HCT116 (cell line): ENCODE measurements at regions of chr3 and their contacts with region 1.

Region 1: GRCh38 chr3:141561426-141562034 is 74.7 kb downstream of the RASA2 start:
- DNase-seq: peak; percentile 58
- ATAC-seq: no peak
- H3K4me3 ChIP-seq: no peak overlapping the region
- H3K27ac ChIP-seq: no peak overlapping the region
- H3K4me1 ChIP-seq: no peaks in the 10 kb centered on the region
- H3K27me3 ChIP-seq: no peaks in the 10 kb centered on the region
- CTCF ChIP-seq: peak; percentile 89 to 96 (median 94)
- POLR2A ChIP-seq: no peak
- RAD21 ChIP-seq: peak; percentile 96

Region 2: GRCh38 chr3:141303481-141304223 is 257.9 kb before region 1 on chr3:
- CTCF ChIA-PET with region 1: interaction called, 10 read pairs
- POLR2A ChIA-PET with region 1: no interaction called
- RAD21 ChIA-PET with region 1: no interaction called
- intact Hi-C with region 1: loop called (anchors 2 kb)
- DNase-seq: peak; percentile 51
- ATAC-seq: peak; percentile 69
- H3K4me3 ChIP-seq: no peak overlapping the region
- H3K27ac ChIP-seq: no peak overlapping the region
- H3K4me1 ChIP-seq: peaks cover 0 to 6% of the 10 kb centered on the region in 2 experiments; a peak in 2 of 4 replicates
- H3K27me3 ChIP-seq: no peaks in the 10 kb centered on the region
- CTCF ChIP-seq: peak; percentile 70 to 91 (median 77)
- POLR2A ChIP-seq: no peak
- RAD21 ChIP-seq: peak; percentile 80

Region 3: DNA sequence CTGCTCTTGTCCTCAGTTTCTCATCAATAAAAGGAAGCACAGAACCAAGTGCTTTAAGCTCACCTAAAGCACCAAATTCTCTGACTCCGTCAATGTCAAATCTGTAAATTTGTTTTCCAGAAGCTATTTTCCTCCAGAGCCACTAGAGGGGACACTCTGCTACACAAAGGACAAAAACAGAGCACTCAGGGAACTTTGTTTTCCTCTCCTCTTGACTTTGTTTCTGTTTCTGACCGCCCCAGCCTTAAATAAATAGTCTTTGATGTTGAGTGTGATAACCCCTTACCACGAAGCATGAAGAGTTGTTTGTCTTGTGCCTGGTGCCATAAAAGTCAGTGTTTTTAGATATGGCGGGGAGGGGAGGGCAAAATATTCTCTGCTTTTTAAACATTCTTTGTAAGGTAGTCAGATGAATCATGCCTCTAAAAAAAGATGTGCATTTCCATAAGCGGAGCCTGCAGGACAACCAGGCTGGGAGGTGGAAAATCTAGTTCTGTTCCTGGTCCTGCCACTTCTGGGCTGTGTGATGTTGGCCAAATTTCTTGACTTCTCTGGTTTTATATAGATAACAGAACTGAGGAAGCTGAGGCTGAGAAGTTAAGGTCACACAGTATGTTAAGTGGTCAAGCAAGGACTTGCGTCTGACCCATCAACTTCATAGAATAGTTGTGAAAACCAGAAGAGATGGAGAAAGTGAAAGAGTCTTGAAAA is 200.5 kb before region 1 on chr3:
- CTCF ChIA-PET with region 1: interaction called, 8 read pairs
- POLR2A ChIA-PET with region 1: no interaction called
- RAD21 ChIA-PET with region 1: no interaction called
- intact Hi-C with region 1: loop called (anchors 1 kb)
- DNase-seq: peak; percentile 59
- ATAC-seq: peak; percentile 89
- H3K4me3 ChIP-seq: peak overlapping the region; percentile 20 to 41; a peak in 2 of 4 replicates
- H3K27ac ChIP-seq: no peak overlapping the region
- H3K4me1 ChIP-seq: peaks cover 7 to 20% of the 10 kb centered on the region in 2 experiments
- H3K27me3 ChIP-seq: no peaks in the 10 kb centered on the region
- CTCF ChIP-seq: peak; percentile 80 to 95 (median 81)
- POLR2A ChIP-seq: no peak
- RAD21 ChIP-seq: peak; percentile 94

Region 4: DNA sequence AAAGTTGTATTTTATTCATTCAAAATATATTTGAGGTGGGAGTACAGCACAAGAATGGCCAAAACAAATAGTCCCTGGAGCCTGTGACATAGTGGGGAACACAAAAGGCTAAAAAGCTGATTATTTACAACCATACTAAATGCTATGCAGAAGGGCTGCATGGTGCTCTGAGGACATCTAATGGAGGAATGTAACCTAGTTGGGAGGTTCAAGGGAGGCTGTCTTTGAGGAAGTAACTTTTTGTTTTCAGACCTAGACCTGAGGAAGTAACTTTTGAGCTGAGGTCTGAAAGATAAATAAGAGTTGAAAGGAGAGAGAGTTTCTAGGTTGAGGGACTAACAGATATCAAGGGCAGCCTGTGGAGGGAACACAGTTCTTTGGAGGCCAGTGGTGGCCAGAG is 109.5 kb before region 1 on chr3:
- CTCF ChIA-PET with region 1: interaction called, 87 read pairs
- POLR2A ChIA-PET with region 1: no interaction called
- RAD21 ChIA-PET with region 1: no interaction called
- intact Hi-C with region 1: no loop called
- DNase-seq: no peak
- ATAC-seq: peak; percentile 67
- H3K4me3 ChIP-seq: no peak overlapping the region
- H3K27ac ChIP-seq: no peak overlapping the region
- H3K4me1 ChIP-seq: peaks cover 0 to 8% of the 10 kb centered on the region in 2 experiments; a peak in 1 of 4 replicates
- H3K27me3 ChIP-seq: no peaks in the 10 kb centered on the region
- CTCF ChIP-seq: peak; percentile 37 to 93 (median 54); a peak in 5 of 6 replicates
- POLR2A ChIP-seq: no peak
- RAD21 ChIP-seq: peak; percentile 94

Region 5: DNA sequence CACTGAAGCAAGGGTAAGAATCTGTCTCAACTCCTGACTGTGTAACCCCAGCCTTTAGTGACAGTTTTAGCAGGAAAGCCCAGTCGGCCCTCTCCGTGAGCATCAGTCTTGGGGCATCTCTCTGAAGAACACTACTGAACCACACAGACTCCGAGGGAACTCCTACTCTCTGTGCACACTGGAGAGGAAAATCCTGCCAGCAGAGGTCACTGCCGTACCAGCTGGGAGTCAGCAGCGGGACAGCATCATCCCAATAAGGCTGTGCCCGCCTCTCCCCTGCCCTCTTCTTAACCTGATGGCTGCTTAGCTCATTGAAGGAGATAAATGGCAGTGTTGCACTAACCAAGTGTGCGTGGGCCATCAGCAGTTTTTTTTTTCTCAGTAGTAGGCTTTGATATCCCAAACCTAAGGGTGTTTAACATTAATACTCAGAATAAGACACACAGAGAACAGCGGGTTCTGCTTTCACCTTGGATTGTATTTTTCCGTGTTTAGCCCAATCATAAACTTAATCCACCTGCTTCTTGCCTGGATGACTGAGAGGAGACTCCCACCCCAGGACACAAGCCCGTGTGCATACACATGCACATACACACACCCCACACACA is 101.3 kb before region 1 on chr3:
- CTCF ChIA-PET with region 1: interaction called, 87 read pairs
- POLR2A ChIA-PET with region 1: no interaction called
- RAD21 ChIA-PET with region 1: interaction called, 7 to 9 read pairs
- intact Hi-C with region 1: loop called (anchors 1 kb)
- DNase-seq: peak; percentile 75
- ATAC-seq: peak; percentile 100
- H3K4me3 ChIP-seq: no peak overlapping the region
- H3K27ac ChIP-seq: no peak overlapping the region
- H3K4me1 ChIP-seq: peaks cover 0 to 5% of the 10 kb centered on the region in 2 experiments; a peak in 2 of 4 replicates
- H3K27me3 ChIP-seq: no peaks in the 10 kb centered on the region
- CTCF ChIP-seq: peak; percentile 88 to 90 (median 90)
- POLR2A ChIP-seq: no peak
- RAD21 ChIP-seq: peak; percentile 96

Region 6: DNA sequence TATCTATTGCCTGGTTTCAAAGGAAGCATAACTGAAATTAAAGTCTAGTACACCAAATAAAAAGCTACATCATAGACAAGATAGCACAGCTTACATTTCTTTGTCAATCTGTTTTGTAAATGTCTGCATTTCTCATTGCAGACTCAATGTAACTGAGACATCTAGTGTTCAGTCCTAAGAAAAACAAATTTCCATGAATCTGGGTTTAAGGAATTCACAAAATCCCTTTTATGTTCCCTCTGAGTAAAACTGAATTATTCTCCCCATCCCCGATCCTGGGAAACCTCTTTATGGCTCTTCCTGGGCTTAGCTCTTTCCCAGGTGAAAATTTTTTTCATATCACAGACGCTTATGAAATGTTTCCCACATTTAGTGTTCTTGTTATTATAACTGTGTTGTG is 96.3 kb before region 1 on chr3:
- CTCF ChIA-PET with region 1: interaction called, 87 read pairs
- POLR2A ChIA-PET with region 1: no interaction called
- RAD21 ChIA-PET with region 1: interaction called, 7 to 9 read pairs
- intact Hi-C with region 1: loop called (anchors 1 kb)
- DNase-seq: no peak
- ATAC-seq: no peak
- H3K4me3 ChIP-seq: no peak overlapping the region
- H3K27ac ChIP-seq: no peak overlapping the region
- H3K4me1 ChIP-seq: peaks cover 0 to 4% of the 10 kb centered on the region in 2 experiments; a peak in 1 of 4 replicates
- H3K27me3 ChIP-seq: no peaks in the 10 kb centered on the region
- CTCF ChIP-seq: peak in 1 of 3 experiments; percentile 38; a peak in 1 of 6 replicates
- POLR2A ChIP-seq: no peak
- RAD21 ChIP-seq: peak; percentile 48